GM10248 (cell line): ENCODE measurements at regions of chr18 and their contacts with region 1.

Region 1: DNA sequence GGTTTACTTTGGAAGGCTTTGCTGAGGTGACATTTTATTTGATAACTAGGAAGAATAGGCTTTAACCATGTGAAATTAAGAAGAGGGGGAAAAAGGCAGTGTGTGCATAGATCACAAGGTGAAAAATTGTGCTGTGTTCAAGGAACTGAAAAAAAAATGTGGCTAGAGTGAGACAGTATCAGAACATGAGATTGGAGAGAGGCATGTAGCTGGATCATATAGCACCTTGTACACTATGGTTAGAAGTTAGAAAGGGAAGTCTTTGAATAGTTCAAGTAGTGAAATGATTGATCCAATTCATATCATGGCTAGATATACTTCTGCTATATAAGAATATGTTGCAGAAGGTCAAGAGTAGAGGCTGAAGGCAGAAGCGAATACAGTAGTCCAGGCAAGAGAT is 12.3 kb upstream of the TNFRSF11A start:
- DNase-seq: no peak
- CTCF ChIP-seq: no peak

Region 2: DNA sequence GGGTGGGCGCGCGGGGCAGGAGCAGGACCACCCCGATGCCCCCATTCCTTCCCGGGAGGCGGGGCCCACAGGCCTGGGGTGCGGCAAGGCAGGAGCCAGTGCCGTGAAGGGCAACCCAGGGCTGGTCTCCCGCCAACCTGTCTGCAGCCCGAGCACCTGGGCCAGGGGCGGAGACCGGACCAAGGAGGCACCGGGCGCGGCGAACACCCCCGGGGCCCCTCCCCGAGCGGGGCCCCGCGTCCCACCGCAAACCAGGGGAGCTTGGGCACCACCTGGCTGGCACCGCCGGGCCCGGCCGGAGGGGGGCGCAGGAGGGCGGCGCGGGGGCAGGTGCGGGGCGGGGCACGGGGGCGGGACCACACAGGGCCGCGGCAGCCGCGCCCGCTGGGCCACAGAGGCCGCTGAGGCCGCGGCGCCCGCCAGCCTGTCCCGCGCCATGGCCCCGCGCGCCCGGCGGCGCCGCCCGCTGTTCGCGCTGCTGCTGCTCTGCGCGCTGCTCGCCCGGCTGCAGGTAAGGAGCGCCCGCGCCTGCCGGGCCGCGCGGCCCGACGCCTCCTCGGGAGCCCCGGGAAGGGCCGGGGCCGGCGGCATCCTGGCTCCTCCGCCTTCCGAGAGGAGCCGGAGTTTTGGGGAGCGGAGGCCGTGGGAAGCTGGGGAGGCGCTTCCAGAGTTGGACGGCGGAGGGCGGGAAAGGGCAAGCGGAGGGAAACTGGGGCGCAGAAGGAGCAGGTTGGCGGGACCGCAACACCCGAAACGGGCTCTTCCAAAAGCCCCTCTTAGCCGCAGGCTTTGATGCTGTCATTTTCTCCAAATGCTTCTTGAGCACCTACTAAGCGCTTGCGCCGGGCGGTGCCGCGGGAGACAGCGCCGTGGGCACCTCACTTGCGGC is 12.3 kb after region 1 on chr18 and contains the start of gene TNFRSF11A:
- CTCF ChIA-PET with region 1: interaction called, 16 read pairs
- POLR2A ChIA-PET with region 1: no interaction called
- DNase-seq: peak; percentile 87
- CTCF ChIP-seq: peak; percentile 62